ENCODE measurements at regions of chr14 and their contacts with region 1.

Region 1: GRCh38 chr14:102316743-102317563 is 2.6 kb upstream of the ZNF839 start:
- DNase-seq: peak; percentile 98
- H3K4me3 Mint-ChIP-seq: peak overlapping the region; percentile 87
- H3K27ac Mint-ChIP-seq: peak overlapping the region; percentile 87
- H3K4me1 Mint-ChIP-seq: peaks cover 54% of the 10 kb centered on the region
- H3K27me3 Mint-ChIP-seq: no peaks in the 10 kb centered on the region

Region 2: DNA sequence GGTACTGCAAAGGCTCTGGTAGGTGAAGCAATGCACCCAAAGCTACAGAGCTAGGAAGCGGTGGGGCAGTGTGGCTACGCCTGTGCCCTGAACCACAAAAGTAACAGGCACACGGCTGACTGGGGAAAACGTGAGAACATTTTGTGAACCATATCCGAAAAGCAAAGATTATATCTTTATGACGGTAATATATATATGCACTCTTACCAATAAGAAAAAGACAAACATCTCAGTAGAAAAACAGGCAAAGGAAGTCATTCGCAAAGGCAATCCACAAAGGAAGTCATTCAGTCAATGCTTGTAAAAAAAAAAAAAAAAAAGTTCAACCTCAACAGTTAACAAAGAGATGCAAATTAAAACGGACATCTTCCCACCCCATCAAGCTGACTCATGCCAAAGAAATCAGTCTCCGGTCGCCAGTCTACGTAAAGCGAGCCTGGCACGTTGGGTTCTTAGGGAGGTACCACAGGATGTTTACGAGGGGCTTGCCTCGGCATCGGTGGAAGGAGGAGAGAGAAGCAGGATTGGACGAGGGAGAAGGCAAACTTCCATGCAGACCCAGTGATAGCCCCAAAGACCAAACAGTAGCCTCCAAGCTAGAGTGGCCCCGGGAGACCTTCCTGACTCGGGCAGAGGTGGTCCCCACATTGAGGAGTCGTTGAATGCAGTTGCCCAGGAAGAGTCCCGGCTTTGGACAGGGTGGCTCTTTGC is 594.8 kb before region 1 on chr14:
- CTCF ChIA-PET with region 1: no interaction called
- POLR2A ChIA-PET with region 1: no interaction called
- intact Hi-C with region 1: loop called (anchors 5 kb)
- DNase-seq: peak; percentile 86
- H3K4me3 Mint-ChIP-seq: peak overlapping the region; percentile 77
- H3K27ac Mint-ChIP-seq: peak overlapping the region; percentile 99
- H3K4me1 Mint-ChIP-seq: peaks cover 45% of the 10 kb centered on the region
- H3K27me3 Mint-ChIP-seq: no peaks in the 10 kb centered on the region

Region 3: DNA sequence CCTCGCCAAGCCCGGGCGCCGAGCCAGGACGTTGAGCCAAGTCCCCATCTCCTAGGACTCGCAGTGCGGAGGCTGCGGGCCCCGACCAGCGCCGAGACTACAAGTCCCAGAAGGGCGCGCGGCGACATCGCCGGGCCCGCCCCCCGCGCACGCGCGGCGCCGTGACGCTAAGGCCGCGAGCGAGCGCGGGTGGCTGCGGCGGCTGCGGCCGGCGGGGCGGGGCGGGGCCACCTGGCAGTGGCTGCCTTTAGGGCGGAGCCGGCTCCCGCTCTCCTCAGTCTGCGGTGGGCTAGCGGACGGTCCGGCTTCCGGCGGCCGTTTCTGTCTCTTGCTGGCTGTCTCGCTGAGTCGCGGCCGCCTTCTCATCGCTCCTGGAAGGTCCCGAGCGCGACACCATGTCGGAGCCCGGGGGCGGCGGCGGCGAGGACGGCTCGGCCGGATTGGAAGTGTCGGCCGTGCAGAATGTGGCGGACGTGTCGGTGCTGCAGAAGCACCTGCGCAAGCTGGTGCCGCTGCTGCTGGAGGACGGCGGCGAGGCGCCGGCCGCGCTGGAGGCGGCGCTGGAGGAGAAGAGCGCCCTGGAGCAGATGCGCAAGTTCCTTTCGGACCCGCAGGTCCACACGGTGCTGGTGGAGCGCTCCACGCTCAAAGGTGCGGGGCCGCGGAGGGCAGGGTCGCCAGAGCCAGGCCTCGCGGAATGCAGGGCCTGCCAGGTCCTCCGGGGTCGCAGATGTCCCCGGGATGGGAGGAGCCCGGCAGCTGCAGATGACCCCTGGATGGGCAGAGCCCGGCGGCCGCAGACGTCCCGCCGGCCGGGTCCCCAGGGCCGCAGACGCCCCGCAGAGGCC is 352.4 kb before region 1 on chr14 and contains the start of gene DYNC1H1:
- CTCF ChIA-PET with region 1: interaction called, 11 read pairs
- POLR2A ChIA-PET with region 1: no interaction called
- intact Hi-C with region 1: loop called (anchors 1 kb)
- DNase-seq: peak; percentile 91
- H3K4me3 Mint-ChIP-seq: peak within 1 kb of the TSS; percentile 88
- H3K27ac Mint-ChIP-seq: peak within 1 kb of the TSS; percentile 84
- H3K4me1 Mint-ChIP-seq: peaks cover 35% of the 10 kb centered on the region
- H3K27me3 Mint-ChIP-seq: no peaks in the 10 kb centered on the region
- total RNA-seq, gene DYNC1H1: 242 to 245 TPM

Region 4: GRCh38 chr14:102096214-102097114 is 220.5 kb before region 1 on chr14:
- CTCF ChIA-PET with region 1: interaction called, 16 read pairs
- POLR2A ChIA-PET with region 1: no interaction called
- intact Hi-C with region 1: no loop called
- DNase-seq: peak; percentile 80
- H3K4me3 Mint-ChIP-seq: no peak overlapping the region
- H3K27ac Mint-ChIP-seq: no peak overlapping the region
- H3K4me1 Mint-ChIP-seq: peaks cover 22% of the 10 kb centered on the region
- H3K27me3 Mint-ChIP-seq: no peaks in the 10 kb centered on the region

Region 5: DNA sequence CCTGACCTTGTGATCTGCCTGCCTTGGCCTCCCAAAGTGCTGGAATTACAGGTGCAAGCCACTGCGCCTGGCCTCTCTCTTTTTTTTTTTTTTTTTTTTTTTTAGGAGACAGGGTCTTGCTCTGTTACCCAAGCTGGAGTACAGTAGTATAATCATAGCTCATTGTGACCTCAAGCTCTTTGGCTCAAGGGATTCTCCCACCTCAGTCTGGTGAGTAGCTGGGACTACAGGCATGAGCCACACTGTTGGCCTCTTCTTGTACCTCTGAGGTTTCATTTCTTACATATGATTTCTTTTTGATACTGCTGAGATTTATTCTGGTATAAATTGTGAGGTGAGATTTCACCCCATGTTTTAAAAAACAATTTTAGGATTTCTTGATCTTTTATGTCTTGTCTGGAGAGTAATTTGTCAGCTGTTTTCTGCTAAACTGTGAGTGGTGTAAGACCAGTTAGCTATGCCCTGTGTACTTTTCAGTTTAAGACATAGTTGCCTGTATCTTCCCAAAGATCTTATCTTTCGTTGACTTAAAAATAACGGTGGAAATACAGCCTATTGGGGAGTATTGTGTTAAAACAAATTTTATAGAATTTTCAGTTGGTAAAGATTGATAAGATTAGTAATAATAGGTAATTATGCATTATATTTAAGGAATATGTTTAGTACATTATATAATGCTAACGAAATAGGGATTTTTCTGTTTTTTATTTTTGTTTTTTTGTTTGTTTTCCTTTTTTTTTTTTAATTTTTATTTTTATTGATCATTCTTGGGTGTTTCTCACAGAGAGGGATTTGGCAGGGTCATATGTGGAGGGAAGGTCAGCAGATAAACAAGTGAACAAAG is 145.6 kb before region 1 on chr14:
- CTCF ChIA-PET with region 1: no interaction called
- POLR2A ChIA-PET with region 1: no interaction called
- intact Hi-C with region 1: no loop called
- DNase-seq: no peak
- H3K4me3 Mint-ChIP-seq: no peak overlapping the region
- H3K27ac Mint-ChIP-seq: no peak overlapping the region
- H3K4me1 Mint-ChIP-seq: peaks cover 39% of the 10 kb centered on the region
- H3K27me3 Mint-ChIP-seq: no peaks in the 10 kb centered on the region

Region 6: DNA sequence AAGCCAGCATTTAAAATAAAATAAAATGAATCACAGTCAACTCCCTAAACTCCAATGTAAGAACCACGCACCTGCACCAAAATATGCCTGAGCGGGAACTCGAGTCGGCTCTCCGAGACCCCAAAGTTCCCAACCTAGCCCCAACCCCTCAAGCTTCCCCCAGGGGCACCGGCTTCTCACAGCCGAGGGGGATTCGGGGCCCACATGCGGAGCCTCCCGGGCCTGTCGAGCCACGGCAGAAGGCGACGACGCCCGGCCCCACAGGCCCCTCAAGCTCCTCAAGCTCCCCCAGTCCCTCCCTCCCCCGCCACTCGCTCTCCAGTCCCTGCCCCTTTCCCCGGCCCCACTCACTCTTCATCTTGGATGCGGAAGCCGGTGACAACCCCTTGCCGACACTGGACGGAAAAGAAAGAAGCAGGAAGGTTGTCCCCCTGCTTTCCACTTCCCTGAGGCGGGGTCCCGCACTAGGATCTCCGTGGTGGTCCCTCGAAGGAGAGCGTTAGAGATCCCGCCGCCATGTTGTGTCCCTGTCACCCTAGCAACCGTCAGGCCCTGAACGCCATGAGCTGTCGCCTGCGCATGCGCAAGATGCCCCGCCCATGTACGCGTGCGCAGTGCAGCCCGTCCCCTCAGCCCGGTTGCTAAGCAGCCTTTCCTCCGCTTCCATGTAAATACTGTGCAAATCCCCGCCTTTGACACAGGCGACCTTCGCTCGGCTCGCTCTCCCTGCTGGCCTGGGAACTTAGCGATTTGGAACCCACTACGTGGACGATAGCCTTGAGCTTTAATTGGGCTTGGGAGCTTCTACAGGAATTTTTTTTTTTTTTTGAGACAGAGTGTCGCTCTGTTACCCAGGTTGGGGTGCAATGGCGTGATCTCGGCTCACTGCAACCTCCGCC is 12.1 kb before region 1 on chr14 and contains the start of gene MOK:
- CTCF ChIA-PET with region 1: interaction called, 58 read pairs
- POLR2A ChIA-PET with region 1: interaction called, 11 read pairs
- intact Hi-C with region 1: loop called (anchors 1 kb)
- DNase-seq: peak; percentile 98
- H3K4me3 Mint-ChIP-seq: peak within 1 kb of the TSS; percentile 95
- H3K27ac Mint-ChIP-seq: peak within 1 kb of the TSS; percentile 91
- H3K4me1 Mint-ChIP-seq: peaks cover 9% of the 10 kb centered on the region
- H3K27me3 Mint-ChIP-seq: no peaks in the 10 kb centered on the region
- total RNA-seq, gene MOK: 2.7 TPM

Region 7: DNA sequence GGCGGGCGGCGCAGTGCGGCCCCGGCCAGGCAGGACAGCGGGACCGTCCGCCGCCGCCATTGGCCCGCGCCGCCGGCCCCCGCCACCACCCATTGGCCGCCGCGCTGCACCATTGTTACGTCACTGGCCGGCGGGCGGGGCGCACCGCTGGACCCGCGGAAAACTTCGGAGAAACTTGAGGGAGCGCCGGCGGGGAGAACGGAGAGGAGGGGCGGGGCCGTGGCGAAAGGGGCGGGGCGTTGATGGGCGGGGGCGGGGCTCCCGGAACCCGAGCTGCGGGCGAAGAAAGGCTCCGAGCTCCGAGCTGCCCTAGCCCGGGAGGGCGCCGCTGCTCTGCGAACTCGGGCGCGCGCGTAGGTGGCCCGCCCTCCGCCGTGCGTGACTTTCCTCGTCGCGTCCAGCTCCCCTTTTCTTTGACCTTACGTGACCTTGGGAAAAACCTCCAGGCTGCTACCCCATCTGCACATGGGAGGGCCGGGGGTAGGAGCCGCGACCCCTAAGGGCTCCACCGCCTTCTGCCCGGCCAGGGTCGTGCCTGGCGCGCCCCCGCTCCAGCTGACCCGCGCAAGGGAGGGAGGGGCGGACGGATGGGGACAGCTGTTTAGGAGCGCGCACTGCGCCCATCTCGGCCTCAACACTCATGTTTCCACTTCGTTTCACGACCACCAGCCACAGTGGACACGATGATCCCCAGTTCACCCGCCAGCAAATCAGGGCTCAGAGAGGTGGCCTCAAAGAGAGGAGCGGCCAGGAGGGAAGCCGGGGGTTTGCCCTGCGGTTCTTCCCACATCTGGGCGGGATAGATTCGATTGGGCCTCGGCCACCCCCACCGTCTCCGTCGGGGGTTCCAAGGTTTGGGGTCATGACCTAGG is 193.0 kb after region 1 on chr14 and contains the start of gene ANKRD9:
- CTCF ChIA-PET with region 1: no interaction called
- POLR2A ChIA-PET with region 1: interaction called, 4 read pairs
- intact Hi-C with region 1: loop called (anchors 1 kb)
- DNase-seq: peak; percentile 94
- H3K4me3 Mint-ChIP-seq: peak within 1 kb of the TSS; percentile 78
- H3K27ac Mint-ChIP-seq: peak within 1 kb of the TSS; percentile 54
- H3K4me1 Mint-ChIP-seq: peaks cover 10% of the 10 kb centered on the region
- H3K27me3 Mint-ChIP-seq: no peaks in the 10 kb centered on the region
- total RNA-seq, gene ANKRD9: 15.2 to 17.5 TPM

Measured in activated CD4-positive, alpha-beta memory T cell treated with anti-CD3 and anti-CD28 coated beads for 36 hours (primary cell).